ENCODE measurements at regions of chr1 and their contacts with region 1.

Region 1: DNA sequence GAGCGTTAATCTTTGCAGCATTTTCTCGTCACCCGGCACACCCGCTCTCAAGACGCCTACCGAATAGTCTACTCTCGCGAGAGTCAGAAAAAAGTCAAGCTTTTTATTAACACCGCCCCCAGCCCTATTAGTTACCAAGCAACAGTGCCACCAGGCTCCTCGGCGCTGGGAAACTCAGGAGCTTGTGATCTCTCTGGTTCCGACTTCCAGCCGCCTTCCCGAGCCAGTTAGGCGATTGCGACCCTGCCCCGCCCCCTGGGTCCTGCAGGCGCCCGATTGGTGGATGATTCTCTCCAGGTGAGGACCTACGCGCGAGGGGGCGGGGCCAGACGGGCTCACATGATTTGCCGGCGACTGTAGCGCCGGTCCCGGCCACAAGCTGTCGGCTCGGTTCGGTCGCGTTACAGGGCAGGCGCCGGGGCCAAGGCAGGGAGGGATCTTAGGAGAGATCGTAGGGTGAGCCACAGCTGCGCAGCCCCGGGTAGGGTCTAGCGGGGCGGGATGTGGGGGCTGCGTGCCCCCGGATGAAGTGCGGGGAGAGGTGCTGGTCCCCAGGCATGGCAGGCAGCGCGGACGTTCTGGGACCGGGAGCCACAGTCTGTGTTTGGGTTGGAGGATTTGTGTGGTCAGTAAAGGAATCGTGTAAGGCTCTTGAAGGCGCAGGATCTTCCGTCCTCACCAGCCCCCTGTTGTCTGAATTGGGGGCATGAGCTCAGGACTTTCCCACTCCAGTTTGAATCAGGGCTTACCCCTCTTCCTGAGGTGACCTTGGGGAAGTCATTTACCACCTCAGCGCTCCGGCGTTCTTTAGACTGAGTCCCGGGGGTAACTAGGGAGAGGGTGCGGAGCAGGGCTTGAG is at the start of gene PFKFB2:
- DNase-seq: peak; percentile 90
- H3K4me3 Mint-ChIP-seq: peak within 1 kb of the TSS; percentile 100
- H3K27ac Mint-ChIP-seq: peak within 1 kb of the TSS; percentile 82
- H3K4me1 Mint-ChIP-seq: peaks cover 53% of the 10 kb centered on the region
- H3K27me3 Mint-ChIP-seq: peaks cover 5% of the 10 kb centered on the region
- total RNA-seq, gene PFKFB2: 2.9 and 4.4 TPM in 2 replicates

Region 2: GRCh38 chr1:206608108-206608698 is 444.9 kb before region 1 on chr1:
- intact Hi-C with region 1: no loop called
- DNase-seq: peak; percentile 38
- H3K4me3 Mint-ChIP-seq: peak overlapping the region; percentile 98
- H3K27ac Mint-ChIP-seq: peak overlapping the region; percentile 97
- H3K4me1 Mint-ChIP-seq: peaks cover 52% of the 10 kb centered on the region
- H3K27me3 Mint-ChIP-seq: no peaks in the 10 kb centered on the region

Region 3: GRCh38 chr1:206635080-206635977 is 417.8 kb before region 1 on chr1 and contains the start of gene DYRK3:
- intact Hi-C with region 1: loop called (anchors 10 kb)
- DNase-seq: peak; percentile 95
- H3K4me3 Mint-ChIP-seq: peak within 1 kb of the TSS; percentile 89
- H3K27ac Mint-ChIP-seq: peak within 1 kb of the TSS; percentile 95
- H3K4me1 Mint-ChIP-seq: peaks cover 38% of the 10 kb centered on the region
- H3K27me3 Mint-ChIP-seq: peaks cover 7% of the 10 kb centered on the region
- total RNA-seq, gene DYRK3: 22.1 and 23.3 TPM in 2 replicates

Region 4: GRCh38 chr1:206734499-206735142 is 318.5 kb before region 1 on chr1:
- intact Hi-C with region 1: loop called (anchors 10 kb)
- DNase-seq: peak; percentile 56
- H3K4me3 Mint-ChIP-seq: no peak overlapping the region
- H3K27ac Mint-ChIP-seq: no peak overlapping the region
- H3K4me1 Mint-ChIP-seq: peaks cover 61% of the 10 kb centered on the region
- H3K27me3 Mint-ChIP-seq: no peaks in the 10 kb centered on the region

Region 5: GRCh38 chr1:206982216-206982615 is 70.9 kb before region 1 on chr1:
- intact Hi-C with region 1: no loop called
- DNase-seq: peak; percentile 36
- H3K4me3 Mint-ChIP-seq: no peak overlapping the region
- H3K27ac Mint-ChIP-seq: no peak overlapping the region
- H3K4me1 Mint-ChIP-seq: no peaks in the 10 kb centered on the region
- H3K27me3 Mint-ChIP-seq: peaks cover 34% of the 10 kb centered on the region

Region 6: DNA sequence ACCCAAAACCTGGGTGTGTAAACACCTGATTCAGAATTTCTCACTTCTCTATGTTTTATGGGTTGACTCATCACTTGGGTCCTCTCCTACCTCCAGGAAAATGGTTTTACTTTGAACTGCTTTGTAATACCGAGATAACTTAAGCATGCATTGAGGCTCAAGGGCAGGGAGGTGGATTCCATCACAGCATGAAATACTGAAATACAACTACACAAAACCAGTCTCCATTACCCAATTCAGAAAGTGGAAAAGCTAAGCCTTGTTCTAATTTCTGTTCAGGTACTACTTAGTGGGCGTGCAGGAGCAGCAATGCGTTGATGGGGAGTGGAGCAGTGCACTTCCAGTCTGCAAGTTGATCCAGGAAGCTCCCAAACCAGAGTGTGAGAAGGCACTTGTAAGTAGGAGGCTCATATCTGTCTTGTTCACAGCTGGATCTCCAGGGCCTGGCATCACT is 44.8 kb after region 1 on chr1:
- intact Hi-C with region 1: loop called (anchors 1 kb)
- DNase-seq: peak; percentile 50
- H3K4me3 Mint-ChIP-seq: peak overlapping the region; percentile 27
- H3K27ac Mint-ChIP-seq: peak overlapping the region; percentile 69
- H3K4me1 Mint-ChIP-seq: peaks cover 40% of the 10 kb centered on the region
- H3K27me3 Mint-ChIP-seq: no peaks in the 10 kb centered on the region

Region 7: DNA sequence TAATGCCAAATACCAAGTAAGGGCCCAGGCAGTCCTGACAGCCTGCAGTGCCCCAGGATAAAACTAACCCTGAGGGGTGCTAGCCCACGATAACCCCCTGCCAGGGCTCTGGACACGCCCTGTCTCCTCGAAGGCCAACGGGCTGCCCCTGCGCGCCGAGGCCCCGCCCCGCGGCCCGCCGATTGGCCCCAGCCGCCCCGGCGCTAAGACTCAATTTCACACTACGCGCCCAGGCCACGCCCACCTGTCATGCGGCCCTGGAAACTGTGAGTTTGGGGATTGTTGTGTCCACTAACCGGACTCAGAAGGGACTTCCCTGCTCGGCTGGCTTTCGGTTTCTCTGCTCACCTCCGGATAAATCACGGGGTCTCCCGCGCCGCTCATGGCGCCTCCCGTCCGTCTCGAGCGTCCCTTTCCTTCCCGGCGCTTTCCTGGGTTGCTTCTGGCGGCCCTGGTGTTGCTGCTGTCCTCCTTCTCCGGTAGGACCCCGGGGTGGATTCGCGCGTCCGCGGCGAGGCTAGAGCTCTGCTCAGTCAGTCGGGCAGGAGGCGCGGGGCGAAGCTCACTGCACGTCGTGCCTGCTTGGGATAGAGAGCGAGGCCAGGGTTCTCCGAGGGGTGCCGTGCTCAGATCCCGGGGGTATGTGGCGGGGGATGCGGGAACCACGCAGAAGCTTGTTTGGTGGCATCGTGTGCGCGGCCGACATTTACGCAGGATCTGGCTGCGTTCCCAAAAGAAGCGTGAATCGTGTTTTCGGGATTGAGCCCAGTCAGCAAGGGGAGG is 591.9 kb after region 1 on chr1 and contains the start of gene CR1L:
- intact Hi-C with region 1: loop called (anchors 2 kb)
- DNase-seq: peak; percentile 74
- H3K4me3 Mint-ChIP-seq: peak within 1 kb of the TSS; percentile 80
- H3K27ac Mint-ChIP-seq: no peak within 1 kb of the TSS
- H3K4me1 Mint-ChIP-seq: peaks cover 8% of the 10 kb centered on the region
- H3K27me3 Mint-ChIP-seq: peaks cover 26% of the 10 kb centered on the region
- total RNA-seq, gene CR1L: not detected in 2 replicates